ENCODE measurements at regions of chr20 and their contacts with region 1.

Region 1: DNA sequence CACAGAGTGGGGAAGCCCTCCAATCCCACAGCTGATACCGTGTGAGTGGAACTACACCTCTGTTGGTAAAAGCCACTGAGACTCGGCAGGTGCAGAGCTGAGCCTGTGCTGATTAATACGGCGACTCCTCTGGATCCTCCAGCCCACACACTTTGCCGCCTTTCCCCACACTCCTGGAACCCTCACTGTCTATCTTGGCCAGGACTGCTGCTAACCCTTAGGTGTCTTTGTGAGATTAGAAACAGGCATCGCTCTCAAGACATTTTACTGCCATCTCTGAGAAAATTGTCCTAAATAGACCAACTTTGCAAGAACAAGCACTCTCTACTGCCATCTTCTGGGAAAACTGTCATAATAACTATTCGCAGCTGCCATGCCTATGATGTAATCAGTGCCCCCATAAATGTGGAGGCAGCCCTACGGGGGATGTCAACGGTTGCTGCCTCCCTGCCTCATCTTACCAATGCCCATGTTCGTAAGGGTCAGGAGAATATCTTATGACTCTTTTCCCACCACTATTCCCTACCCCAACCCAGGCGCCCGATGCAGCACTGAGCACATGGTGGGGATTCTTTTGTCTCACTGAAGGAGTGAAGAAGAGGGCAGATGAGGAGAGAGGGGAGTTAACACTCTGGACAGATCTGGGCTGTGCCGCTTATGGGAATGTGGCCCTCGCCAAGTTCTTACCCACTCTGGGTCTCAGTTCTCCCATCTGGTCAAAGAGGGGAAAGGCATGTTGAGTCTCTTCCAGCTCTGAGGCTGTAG is 26.1 kb upstream of the KCNB1 start:
- DNase-seq: peak; percentile 56
- ATAC-seq: peak; percentile 60
- H3K4me3 ChIP-seq: no peak overlapping the region
- H3K27ac ChIP-seq: no peak overlapping the region
- H3K4me1 ChIP-seq: no peaks in the 10 kb centered on the region
- H3K27me3 ChIP-seq: peaks cover 1 to 40% of the 10 kb centered on the region in 2 experiments; a peak in 3 of 5 replicates
- CTCF ChIP-seq: peak; percentile 84
- EP300 ChIP-seq: no peak
- POLR2A ChIP-seq: no peak
- RAD21 ChIP-seq: peak; percentile 62

Region 2: GRCh38 chr20:49338061-49338460 is 170.6 kb before region 1 on chr20:
- CTCF ChIA-PET with region 1: interaction called, 134 read pairs
- POLR2A ChIA-PET with region 1: no interaction called
- in situ Hi-C with region 1: no loop called
- intact Hi-C with region 1: loop called (anchors 1 kb)
- DNase-seq: no peak
- ATAC-seq: no peak
- H3K4me3 ChIP-seq: no peak overlapping the region
- H3K27ac ChIP-seq: no peak overlapping the region
- H3K4me1 ChIP-seq: no peaks in the 10 kb centered on the region
- H3K27me3 ChIP-seq: peaks cover 1 to 25% of the 10 kb centered on the region in 2 experiments; a peak in 3 of 5 replicates
- CTCF ChIP-seq: no peak
- EP300 ChIP-seq: no peak
- POLR2A ChIP-seq: no peak
- RAD21 ChIP-seq: no peak

Region 3: DNA sequence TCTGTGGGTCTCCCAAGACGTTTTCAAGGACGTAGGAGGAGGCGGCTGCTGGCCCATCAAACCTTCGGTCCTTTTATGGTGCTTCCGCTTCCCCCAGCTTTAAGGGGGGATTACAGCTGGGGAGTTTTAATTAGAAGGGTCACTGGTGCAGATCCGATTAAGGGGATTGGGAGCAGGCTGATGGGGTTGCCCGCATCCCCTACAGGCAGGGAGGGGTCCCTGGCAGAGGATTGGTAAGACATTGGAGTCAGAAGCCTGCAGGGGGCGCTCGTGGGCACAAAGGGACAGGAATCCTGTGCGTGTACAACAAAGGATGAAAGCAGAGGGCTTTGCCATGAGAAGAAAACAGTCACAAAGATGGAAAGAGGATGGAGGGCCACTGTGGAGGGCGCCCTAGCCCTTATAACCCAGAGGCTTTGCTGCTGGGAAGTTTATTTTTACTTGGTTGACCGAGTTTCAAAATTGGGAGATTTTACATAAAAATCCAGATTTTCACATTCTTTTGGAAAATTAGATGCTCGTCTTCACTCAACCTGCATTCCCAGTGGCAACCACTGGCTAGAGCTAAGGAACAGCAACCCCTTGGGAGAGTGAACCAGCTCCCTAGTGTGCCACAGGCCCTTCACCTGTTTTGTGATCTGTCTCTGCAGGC is 124.1 kb before region 1 on chr20:
- CTCF ChIA-PET with region 1: interaction called, 14 read pairs
- POLR2A ChIA-PET with region 1: no interaction called
- in situ Hi-C with region 1: no loop called
- intact Hi-C with region 1: no loop called
- DNase-seq: peak; percentile 79
- ATAC-seq: peak; percentile 89
- H3K4me3 ChIP-seq: no peak overlapping the region
- H3K27ac ChIP-seq: no peak overlapping the region
- H3K4me1 ChIP-seq: no peaks in the 10 kb centered on the region
- H3K27me3 ChIP-seq: peaks cover 6 to 25% of the 10 kb centered on the region in 2 experiments; a peak in 3 of 5 replicates
- CTCF ChIP-seq: peak; percentile 79
- EP300 ChIP-seq: no peak
- POLR2A ChIP-seq: no peak
- RAD21 ChIP-seq: peak; percentile 54; the same call in 1 of the 2 replicates

Region 4: GRCh38 chr20:49594143-49594930 is 85.7 kb after region 1 on chr20:
- CTCF ChIA-PET with region 1: no interaction called
- POLR2A ChIA-PET with region 1: no interaction called
- in situ Hi-C with region 1: no loop called
- intact Hi-C with region 1: no loop called
- DNase-seq: no peak
- ATAC-seq: peak; percentile 27
- H3K4me3 ChIP-seq: peak overlapping the region in 1 of 3 experiments; percentile 44; a peak in 1 of 6 replicates
- H3K27ac ChIP-seq: no peak overlapping the region
- H3K4me1 ChIP-seq: peaks cover 54% of the 10 kb centered on the region
- H3K27me3 ChIP-seq: no peaks in the 10 kb centered on the region; a peak in 3 of 5 replicates
- CTCF ChIP-seq: no peak; the same call in 1 of the 2 replicates
- EP300 ChIP-seq: no peak
- POLR2A ChIP-seq: no peak
- RAD21 ChIP-seq: no peak; the same call in 1 of the 2 replicates

Measured in HepG2 (cell line).